Dorsolateral prefrontal cortex (tissue), 120 donors: ENCODE measurements at regions of chr16 and their contacts with region 1.

Region 1: DNA sequence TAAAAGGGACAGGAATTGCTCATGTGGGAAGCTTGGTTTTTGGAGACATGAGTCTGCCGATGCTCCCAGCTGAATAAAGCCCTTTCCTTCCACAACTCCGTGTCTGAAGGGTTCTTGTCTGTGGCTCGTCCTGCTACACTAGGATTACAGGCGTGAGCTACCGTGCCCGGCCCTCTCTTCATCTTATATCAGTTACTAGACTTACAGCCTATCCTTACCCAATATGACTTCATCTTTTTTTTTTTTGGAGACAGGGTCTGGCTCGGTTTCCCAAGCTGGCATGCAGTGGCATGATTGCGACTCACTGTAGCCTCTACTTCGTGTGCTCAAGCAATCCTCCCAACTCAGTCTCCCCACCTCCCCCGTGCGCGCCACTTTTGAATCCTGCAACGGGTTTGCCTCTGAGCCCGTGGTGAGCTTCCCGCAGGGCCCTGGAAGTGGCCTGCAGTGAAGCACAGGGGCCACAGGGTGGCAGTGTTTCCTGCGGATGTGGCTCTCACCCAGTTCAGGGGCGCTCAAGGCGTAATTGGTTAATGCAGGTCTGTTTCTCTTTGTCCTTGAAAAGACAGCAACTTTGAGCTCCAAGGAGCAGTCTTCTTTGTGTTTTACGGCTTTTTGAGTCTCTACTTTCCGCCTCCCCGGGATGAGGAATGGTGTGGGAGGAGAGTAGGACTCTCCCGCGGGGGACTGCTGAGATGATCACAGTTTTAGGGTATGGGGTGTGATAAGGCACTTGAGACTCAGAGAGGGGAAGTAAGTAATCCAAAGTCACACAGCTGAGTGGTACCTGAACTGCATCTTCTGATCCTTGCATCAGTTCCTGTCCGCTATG is 22.7 kb upstream of the GPRC5B start:
- DNase-seq: peak; percentile 48 to 79 (median 63)
- H3K4me3 ChIP-seq: peak overlapping the region in 11 of 59 donors; percentile 9 to 45 (median 20)
- H3K27ac ChIP-seq: no peak overlapping the region
- H3K27me3 ChIP-seq: peaks cover 0 to 14% (median 0%) of the 10 kb centered on the region in 45 donors
- CTCF ChIP-seq: peak; percentile 52 to 99 (median 94)

Region 2: GRCh38 chr16:19853742-19854542 is 53.4 kb before region 1 on chr16:
- intact Hi-C with region 1: no loop called
- DNase-seq: peak in 2 of 10 donors; percentile 33 to 42
- H3K4me3 ChIP-seq: no peak overlapping the region
- H3K27ac ChIP-seq: peak overlapping the region in 58 of 59 donors; percentile 11 to 99 (median 95)
- H3K27me3 ChIP-seq: no peaks in the 10 kb centered on the region
- CTCF ChIP-seq: no peak

Region 3: DNA sequence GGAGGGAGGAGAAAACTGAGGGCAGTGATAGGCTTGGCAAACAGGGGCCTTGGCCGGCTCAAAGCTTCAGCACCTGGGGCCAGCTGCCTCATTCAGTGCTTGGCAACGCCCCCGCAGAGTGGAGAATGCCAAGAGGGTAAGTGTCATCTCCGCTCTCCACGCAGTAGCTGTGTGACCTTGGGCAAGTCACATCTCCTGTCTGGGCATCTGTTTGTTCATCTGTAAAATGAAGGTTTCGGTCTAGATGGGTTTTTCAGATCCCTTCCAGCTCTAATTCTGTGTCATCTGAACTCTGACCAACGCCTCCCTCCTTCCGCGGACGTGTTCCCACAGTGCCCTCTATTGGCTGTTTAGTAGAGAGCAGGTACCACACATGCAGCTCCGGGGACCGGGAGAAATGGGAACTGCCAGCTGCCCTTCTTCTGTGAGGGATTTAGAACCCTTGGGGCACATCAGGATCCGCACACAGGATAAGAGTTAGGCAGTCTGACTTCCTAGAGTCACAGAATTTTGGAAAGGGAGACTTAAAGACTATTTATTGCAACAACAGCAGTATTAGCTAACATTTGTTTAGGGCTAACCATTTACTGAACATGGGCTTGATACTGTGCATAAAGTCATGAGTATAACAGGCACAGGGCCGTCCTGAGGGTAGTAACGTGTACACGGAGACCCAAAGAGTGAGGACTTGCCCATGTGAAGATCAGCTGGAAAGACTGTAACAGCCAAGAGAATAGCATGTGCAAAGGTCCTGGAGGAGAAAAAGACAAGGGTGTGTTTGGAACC is 393.1 kb after region 1 on chr16:
- intact Hi-C with region 1: loop called (anchors 2 to 5 kb)
- DNase-seq: peak in 7 of 10 donors; percentile 5 to 56 (median 31)
- H3K4me3 ChIP-seq: no peak overlapping the region
- H3K27ac ChIP-seq: no peak overlapping the region
- H3K27me3 ChIP-seq: peaks cover 0 to 19% (median 2%) of the 10 kb centered on the region in 45 donors
- CTCF ChIP-seq: peak in 55 of 56 donors; percentile 21 to 79 (median 65)

Region 4: DNA sequence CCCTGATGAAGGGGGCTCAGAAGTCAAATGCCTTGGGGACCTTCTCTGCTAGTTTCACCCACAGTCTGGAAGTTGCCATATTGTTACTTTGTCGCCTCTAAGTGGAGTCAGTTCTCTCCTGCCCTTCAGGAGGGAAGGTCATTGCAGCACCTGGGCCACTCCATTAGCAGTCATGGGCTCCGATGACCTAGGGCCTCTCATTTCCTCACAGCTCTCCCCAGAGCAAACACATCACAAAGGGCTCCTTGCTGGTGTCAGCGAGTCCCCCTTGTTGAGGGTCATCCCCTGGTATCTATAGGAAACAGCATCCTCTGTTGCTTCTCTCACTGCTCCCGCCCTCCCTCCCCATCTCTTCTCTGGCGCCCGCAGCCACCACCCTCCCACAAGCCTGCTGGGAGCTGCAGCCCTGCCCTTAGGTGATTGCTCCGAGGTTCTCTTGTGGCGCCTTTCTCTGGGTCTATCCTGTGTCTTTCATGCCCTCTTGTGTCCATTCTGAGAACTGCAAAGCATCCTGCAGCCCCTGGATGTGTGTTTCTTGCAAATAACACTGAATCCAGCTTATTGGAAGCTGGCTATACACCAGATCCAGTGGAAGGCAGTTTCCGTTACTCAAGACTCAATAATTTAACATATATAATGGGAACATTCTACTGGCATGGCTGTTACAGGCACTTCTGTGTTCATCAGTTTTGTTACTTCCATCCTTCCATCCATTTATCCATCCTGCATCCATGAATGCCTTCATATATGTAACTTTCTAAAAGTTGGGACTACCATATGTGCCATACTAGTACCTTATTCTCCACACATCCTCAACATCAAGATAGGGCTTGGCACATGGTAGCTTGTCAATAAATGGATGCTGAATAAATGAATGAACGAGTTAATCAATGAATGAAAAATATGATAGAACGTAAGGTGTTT is 476.0 kb after region 1 on chr16:
- intact Hi-C with region 1: loop called (anchors 2 kb)
- DNase-seq: peak in 8 of 10 donors; percentile 41 to 74 (median 56)
- H3K4me3 ChIP-seq: no peak overlapping the region
- H3K27ac ChIP-seq: no peak overlapping the region
- H3K27me3 ChIP-seq: peaks cover 0 to 16% (median 0%) of the 10 kb centered on the region in 45 donors
- CTCF ChIP-seq: peak; percentile 54 to 93 (median 84)